Activated B cell treated with CpG ODN at 0.5 μM for 24 hours (primary cell): ENCODE measurements at regions of chr7 and their contacts with region 1.

Region 1: GRCh38 chr7:94324380-94325117 is 70.1 kb upstream of the COL1A2 start:
- DNase-seq: no peak
- ATAC-seq: no peak
- H3K4me3 Mint-ChIP-seq: no peak overlapping the region
- H3K27ac Mint-ChIP-seq: no peak overlapping the region
- H3K4me1 Mint-ChIP-seq: no peaks in the 10 kb centered on the region
- H3K27me3 Mint-ChIP-seq: no peaks in the 10 kb centered on the region
- CTCF ChIP-seq: no peak

Region 2: GRCh38 chr7:94289071-94289470 is 35.5 kb before region 1 on chr7:
- CTCF ChIA-PET with region 1: no interaction called
- POLR2A ChIA-PET with region 1: no interaction called
- intact Hi-C with region 1: no loop called
- DNase-seq: no peak
- ATAC-seq: no peak
- H3K4me3 Mint-ChIP-seq: no peak overlapping the region
- H3K27ac Mint-ChIP-seq: no peak overlapping the region
- H3K4me1 Mint-ChIP-seq: no peaks in the 10 kb centered on the region
- H3K27me3 Mint-ChIP-seq: peaks cover 11% of the 10 kb centered on the region
- CTCF ChIP-seq: no peak

Region 3: DNA sequence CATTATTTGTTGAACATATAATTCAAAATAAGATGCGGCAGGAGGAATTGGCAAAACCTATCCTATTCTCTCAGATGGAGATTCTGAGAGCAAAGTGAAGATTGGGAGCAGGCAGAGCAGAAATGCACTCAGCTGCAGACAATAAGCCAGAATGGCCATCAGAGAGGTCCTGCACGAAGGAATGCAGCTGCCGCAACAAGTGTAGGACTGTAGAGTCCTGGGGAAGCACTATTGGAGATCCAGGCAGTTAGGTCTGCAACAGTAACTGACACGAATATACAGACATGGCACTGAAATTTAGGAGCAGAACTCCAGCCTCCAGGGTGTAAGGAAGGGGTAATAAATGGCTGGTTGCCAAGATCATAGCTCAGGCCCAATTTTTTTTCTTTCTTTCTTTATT is 59.8 kb after region 1 on chr7:
- CTCF ChIA-PET with region 1: no interaction called
- POLR2A ChIA-PET with region 1: interaction called, 12 read pairs
- intact Hi-C with region 1: no loop called
- DNase-seq: no peak
- ATAC-seq: no peak
- H3K4me3 Mint-ChIP-seq: no peak overlapping the region
- H3K27ac Mint-ChIP-seq: no peak overlapping the region
- H3K4me1 Mint-ChIP-seq: no peaks in the 10 kb centered on the region
- H3K27me3 Mint-ChIP-seq: peaks cover 9% of the 10 kb centered on the region
- CTCF ChIP-seq: no peak